GM13976 (cell line): ENCODE measurements at regions of chr9 and their contacts with region 1.

Region 1: DNA sequence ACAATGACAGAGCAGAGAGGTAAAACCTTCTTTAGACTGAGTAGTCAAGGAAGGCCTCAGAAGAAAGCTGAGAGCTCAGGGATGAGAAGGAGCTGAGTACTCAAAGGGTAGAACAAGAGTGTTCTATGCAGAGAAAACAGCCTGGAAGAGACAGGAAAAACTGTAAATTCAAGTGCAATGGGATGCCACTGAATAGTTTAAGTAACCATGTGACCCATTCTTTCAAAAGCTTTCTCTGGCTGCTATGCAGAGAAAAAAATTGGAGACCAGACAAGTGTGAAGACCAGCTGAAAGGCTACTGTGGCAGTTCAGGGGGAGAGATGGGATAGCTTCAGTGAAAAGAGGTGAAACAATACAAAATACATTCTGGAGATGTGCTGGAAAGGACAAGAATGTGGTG is 61.3 kb upstream of the RNF38 start:
- DNase-seq: no peak
- CTCF ChIP-seq: no peak

Region 2: DNA sequence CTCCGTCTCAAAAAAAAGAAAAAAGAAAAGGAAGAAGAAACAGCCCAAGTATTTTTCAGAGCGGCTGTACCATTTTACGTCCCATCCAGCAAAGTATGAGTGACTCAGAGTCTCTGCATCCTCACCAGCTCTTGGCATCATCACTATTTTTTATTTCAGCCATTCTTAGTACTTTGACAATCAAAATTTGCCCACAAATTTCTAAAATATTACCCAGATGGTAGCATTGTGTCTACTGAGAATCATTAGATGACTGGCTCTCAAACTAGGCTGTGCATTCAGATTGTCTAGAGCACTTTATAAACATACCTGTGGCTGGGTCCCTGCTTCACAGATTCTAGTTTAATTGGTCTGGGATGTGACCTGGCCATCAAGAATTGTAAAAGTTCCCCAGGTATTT is 89.8 kb after region 1 on chr9:
- in situ Hi-C with region 1: loop called (anchors 10 kb)
- DNase-seq: no peak
- CTCF ChIP-seq: no peak